MCF 10A (cell line): ENCODE measurements at regions of chr9 and their contacts with region 1.

Region 1: DNA sequence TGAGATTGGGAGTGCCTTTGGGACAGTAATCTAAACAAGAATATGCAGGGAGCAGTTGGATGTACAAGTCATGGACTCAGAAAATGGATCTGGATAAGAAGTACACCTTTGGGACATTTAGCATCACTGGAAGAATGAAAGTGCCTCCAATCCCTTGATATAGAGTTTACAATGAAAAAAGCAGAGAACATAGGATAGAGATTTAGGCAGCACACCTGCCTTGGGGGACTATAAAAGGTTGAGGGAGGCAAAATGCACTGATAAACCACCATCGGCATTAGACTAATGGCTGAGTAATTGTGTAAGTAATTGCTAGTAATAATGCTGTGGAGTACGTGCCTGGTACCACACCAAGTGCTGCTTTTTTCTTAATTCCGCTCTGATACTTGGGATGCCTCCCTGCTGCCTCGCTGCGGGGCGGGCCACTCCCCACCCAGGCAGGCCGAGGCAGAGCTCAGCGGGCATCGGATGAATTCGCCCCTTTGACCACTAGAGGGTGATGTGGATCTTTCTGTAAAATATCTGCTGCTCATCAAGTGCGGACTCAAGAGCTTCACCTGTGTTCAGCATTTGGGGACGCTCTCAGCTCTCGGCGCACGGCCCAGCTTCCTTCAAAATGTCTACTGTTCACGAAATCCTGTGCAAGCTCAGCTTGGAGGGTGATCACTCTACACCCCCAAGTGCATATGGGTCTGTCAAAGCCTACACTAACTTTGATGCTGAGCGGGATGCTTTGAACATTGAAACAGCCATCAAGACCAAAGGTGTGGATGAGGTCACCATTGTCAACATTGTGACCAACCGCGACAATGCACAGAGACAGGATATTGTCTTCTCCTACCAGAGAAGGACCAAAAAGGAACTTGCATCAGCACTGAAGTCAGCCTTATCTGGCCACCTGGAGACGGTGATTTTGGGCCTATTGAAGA is 99.9 kb downstream of the ANKRD18B start:
- DNase-seq: peak; percentile 85
- H3K4me3 Mint-ChIP-seq: no peak overlapping the region
- H3K27ac Mint-ChIP-seq: no peak overlapping the region
- H3K4me1 Mint-ChIP-seq: peaks cover 31% of the 10 kb centered on the region
- H3K27me3 Mint-ChIP-seq: no peaks in the 10 kb centered on the region
- CTCF ChIP-seq: peak; percentile 78

Region 2: DNA sequence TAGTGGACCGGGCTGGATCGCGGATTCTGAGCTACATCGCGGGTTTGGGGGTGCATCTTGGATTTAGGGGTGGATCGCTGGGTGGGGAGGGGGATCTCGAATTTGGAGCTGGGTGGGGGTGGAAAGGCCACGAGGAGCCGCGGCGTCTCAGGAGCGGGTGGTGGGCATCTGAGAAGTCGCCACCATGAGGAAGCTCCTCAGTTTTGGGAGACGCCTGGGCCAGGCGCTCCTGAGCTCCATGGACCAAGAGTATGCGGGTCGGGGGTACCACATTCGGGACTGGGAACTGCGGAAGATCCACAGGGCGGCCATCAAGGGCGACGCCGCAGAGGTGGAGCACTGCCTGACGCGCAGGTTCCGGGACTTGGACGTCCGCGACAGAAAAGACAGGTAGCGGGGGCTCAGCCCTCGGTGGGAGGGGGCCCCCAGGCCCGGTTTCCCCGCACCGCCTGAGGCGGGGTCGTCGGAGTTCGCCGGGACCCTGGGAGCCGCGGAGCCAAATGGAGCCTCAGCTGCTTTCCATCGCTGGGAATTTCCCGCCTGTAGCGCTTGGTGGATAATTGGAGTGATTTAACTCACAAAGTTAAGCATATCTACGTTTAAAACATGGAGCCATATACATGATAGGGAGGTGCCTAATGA is 99.5 kb before region 1 on chr9:
- CTCF ChIA-PET with region 1: interaction called, 9 read pairs
- POLR2A ChIA-PET with region 1: interaction called, 13 read pairs
- intact Hi-C with region 1: no loop called
- DNase-seq: peak; percentile 33
- H3K4me3 Mint-ChIP-seq: peak overlapping the region; percentile 96
- H3K27ac Mint-ChIP-seq: peak overlapping the region; percentile 76
- H3K4me1 Mint-ChIP-seq: no peaks in the 10 kb centered on the region
- H3K27me3 Mint-ChIP-seq: no peaks in the 10 kb centered on the region
- CTCF ChIP-seq: no peak

Region 3: GRCh38 chr9:33731142-33731541 is 107.2 kb after region 1 on chr9:
- CTCF ChIA-PET with region 1: interaction called, 18 read pairs
- POLR2A ChIA-PET with region 1: interaction called, 5 read pairs
- intact Hi-C with region 1: no loop called
- DNase-seq: no peak
- H3K4me3 Mint-ChIP-seq: no peak overlapping the region
- H3K27ac Mint-ChIP-seq: no peak overlapping the region
- H3K4me1 Mint-ChIP-seq: peaks cover 12% of the 10 kb centered on the region
- H3K27me3 Mint-ChIP-seq: no peaks in the 10 kb centered on the region
- CTCF ChIP-seq: no peak

Region 4: DNA sequence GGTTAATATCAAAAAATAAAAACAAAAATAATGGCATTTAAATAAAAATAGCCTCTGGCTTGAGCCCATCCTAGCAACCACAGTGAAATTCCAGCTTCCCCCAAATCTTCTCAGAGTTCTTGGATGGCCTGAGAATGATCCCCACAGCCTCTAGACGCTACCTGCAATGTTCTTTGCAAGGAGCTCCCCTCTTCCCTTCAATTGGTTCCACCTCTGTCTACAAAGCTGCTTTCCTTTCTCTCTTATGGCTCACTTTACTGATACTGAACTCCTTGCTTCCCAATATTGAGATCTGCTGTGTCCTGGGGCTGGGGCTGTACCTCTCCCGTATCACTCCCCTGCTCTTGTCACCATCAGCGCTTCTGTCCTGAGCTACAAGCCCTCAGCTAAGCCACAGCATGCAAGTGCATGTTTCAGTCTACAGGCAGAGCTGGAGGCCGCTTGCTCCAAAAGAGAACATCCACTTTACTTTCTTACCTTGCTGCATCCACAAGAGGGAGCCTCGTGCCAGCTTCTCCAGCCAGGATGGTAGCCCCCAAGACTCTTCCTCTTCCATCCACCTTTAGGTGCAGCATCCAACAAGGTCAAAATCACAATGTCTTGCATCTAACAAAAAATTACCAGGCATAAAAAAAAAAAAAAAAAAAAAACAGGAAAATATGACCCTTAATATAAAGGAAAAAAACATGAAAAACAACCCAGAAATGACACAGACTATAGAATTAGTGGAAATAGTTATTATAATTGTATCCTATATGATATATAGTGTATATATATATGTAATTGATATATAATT is 114.1 kb after region 1 on chr9:
- CTCF ChIA-PET with region 1: interaction called, 11 read pairs
- POLR2A ChIA-PET with region 1: no interaction called
- intact Hi-C with region 1: no loop called
- DNase-seq: peak; percentile 71
- H3K4me3 Mint-ChIP-seq: no peak overlapping the region
- H3K27ac Mint-ChIP-seq: peak overlapping the region; percentile 14
- H3K4me1 Mint-ChIP-seq: peaks cover 23% of the 10 kb centered on the region
- H3K27me3 Mint-ChIP-seq: no peaks in the 10 kb centered on the region
- CTCF ChIP-seq: peak; percentile 88

Region 5: GRCh38 chr9:33852216-33852826 is 228.4 kb after region 1 on chr9:
- CTCF ChIA-PET with region 1: interaction called, 5 read pairs
- POLR2A ChIA-PET with region 1: interaction called, 3 read pairs
- intact Hi-C with region 1: loop called (anchors 5 kb)
- DNase-seq: peak; percentile 76
- H3K4me3 Mint-ChIP-seq: no peak overlapping the region
- H3K27ac Mint-ChIP-seq: no peak overlapping the region
- H3K4me1 Mint-ChIP-seq: peaks cover 12% of the 10 kb centered on the region
- H3K27me3 Mint-ChIP-seq: no peaks in the 10 kb centered on the region
- CTCF ChIP-seq: peak; percentile 74